ENCODE measurements at regions of chr11 and their contacts with region 1.

Region 1: GRCh38 chr11:64331557-64332371 is 8.2 kb upstream of the CCDC88B start:
- DNase-seq: peak; percentile 81
- H3K4me3 Mint-ChIP-seq: no peak overlapping the region
- H3K27ac Mint-ChIP-seq: peak overlapping the region; percentile 8
- H3K4me1 Mint-ChIP-seq: peaks cover 13% of the 10 kb centered on the region
- H3K27me3 Mint-ChIP-seq: peaks cover 7% of the 10 kb centered on the region

Region 2: GRCh38 chr11:64317957-64318693 is 13.6 kb before region 1 on chr11 and contains the start of gene PRDX5:
- CTCF ChIA-PET with region 1: interaction called, 46 read pairs
- DNase-seq: peak; percentile 97
- H3K4me3 Mint-ChIP-seq: peak within 1 kb of the TSS; percentile 97
- H3K27ac Mint-ChIP-seq: peak within 1 kb of the TSS; percentile 100
- H3K4me1 Mint-ChIP-seq: peaks cover 55% of the 10 kb centered on the region
- H3K27me3 Mint-ChIP-seq: no peaks in the 10 kb centered on the region

Measured in activated naive CD4-positive, alpha-beta T cell treated with anti-CD3 and anti-CD28 coated beads, Interleukin-2, amount 10 ng/mL, durations not matched to agents 7 days and 5 days (primary cell).